ENCODE measurements at regions of chr4 and their contacts with region 1.

Region 1: DNA sequence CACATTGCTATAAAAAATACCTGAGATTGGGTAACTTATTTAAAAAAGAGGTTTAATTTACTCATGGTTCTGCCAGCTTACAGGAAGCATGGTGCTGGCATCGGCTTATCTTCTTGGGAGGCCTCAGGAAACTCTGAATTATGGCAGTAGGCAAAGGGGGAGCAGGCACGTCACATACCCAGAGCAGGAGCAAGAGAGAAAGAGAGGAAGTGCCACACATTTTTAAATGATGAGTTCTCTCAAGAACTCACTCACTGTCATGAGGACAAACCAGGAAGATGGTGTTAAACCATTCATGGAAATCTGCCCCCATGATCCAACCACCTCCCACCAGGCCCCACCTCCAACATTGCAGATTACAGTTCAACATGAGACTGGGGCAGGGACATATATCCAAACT is 10.0 kb upstream of the AFF1 start:
- DNase-seq: no peak
- H3K4me3 Mint-ChIP-seq: no peak overlapping the region
- H3K27ac Mint-ChIP-seq: no peak overlapping the region
- H3K4me1 Mint-ChIP-seq: peaks cover 21% of the 10 kb centered on the region
- H3K27me3 Mint-ChIP-seq: no peaks in the 10 kb centered on the region

Region 2: GRCh38 chr4:86908251-86908657 is 16.6 kb before region 1 on chr4:
- CTCF ChIA-PET with region 1: interaction called, 11 read pairs
- intact Hi-C with region 1: no loop called
- DNase-seq: no peak
- H3K4me3 Mint-ChIP-seq: no peak overlapping the region
- H3K27ac Mint-ChIP-seq: no peak overlapping the region
- H3K4me1 Mint-ChIP-seq: peaks cover 25% of the 10 kb centered on the region
- H3K27me3 Mint-ChIP-seq: peaks cover 5% of the 10 kb centered on the region

Region 3: DNA sequence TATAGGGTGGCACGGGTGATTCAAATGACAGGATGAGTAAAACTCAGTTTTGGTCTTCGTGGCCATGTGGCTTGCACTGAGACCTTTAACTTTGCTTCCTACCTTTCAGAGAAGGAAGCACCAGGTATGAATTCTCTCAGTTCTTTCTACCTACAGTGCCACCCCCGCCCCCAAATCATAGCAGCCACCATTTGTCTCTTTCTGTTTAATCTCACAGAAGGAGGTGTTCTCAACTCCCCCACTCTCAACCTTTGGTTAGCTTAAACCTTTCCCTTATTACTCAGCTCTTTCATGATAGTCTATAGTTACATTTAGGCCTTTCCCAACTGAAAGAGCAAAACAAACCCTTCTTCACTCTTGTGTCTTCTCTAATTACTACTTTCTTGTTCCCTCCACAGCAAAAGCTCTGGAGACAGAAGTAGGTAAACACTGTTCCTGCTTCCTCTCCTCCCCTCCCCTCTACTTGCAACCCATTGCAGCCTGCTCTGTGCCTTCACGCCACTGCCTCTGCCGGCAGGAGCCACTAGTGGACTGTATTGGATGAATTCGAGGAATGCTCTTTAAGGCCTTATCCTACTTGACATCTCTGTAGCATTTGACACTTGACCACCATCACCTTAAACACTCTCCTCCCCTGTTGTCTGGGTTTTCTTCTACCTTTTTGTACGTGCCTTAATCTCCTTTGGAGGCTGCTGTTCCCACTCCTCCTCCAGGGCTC is 133.7 kb after region 1 on chr4:
- CTCF ChIA-PET with region 1: interaction called, 22 read pairs
- intact Hi-C with region 1: no loop called
- DNase-seq: peak; percentile 68
- H3K4me3 Mint-ChIP-seq: peak overlapping the region; percentile 2
- H3K27ac Mint-ChIP-seq: peak overlapping the region; percentile 24
- H3K4me1 Mint-ChIP-seq: peaks cover 51% of the 10 kb centered on the region
- H3K27me3 Mint-ChIP-seq: no peaks in the 10 kb centered on the region

Region 4: DNA sequence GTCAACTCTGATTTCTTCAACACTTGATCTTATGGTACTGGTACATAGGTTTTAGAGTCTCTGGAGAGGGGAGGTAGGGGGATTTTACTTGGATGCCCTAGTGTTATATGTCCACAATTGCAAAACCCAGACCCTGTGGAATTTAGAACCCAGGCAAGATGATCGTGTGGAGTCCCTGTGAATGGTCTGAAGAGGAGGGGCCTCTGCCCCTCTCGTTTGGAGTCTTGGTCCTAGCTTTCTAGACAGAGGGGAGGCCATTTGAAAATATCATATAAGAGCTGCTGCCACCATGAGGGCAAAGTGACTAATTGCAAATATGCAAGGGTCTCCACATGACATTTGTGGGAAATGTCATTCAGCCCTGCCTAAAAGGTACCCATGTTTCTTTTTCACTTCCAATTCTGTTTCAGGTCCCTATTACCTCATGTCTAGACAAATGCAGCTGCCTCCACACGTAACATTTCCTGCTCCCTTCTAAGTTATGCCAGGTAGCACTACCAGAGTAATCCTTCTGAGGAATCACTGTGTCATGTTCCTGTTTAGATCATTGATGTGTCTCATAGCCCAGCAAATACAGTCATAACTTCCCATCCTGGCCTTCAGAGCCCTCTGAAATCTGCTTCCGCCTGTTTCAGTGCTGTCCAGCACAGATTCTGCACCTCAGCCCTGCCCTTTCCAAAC is 168.8 kb after region 1 on chr4:
- CTCF ChIA-PET with region 1: interaction called, 160 read pairs
- intact Hi-C with region 1: loop called (anchors 1 kb)
- DNase-seq: peak; percentile 66
- H3K4me3 Mint-ChIP-seq: no peak overlapping the region
- H3K27ac Mint-ChIP-seq: peak overlapping the region; percentile 53
- H3K4me1 Mint-ChIP-seq: peaks cover 44% of the 10 kb centered on the region
- H3K27me3 Mint-ChIP-seq: no peaks in the 10 kb centered on the region

Region 5: DNA sequence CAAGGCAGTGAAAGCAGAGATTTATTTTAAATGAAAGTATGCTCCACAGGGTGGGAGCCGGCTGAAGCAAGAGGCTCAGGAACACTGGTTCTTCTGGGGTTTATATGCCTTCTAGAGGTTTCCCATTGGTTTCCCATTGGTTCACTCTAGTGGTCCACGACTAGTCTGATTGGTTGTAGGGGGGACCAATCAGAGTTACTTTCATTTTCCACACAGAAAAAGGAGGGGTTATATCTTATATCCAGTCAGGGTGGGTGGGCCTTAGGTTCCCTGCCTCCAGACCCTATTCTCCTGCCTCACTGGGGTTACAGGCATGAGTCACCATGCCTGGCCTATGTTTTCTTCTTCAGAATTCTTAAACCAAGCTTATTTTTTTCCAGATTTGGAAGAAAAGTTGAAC is 194.0 kb after region 1 on chr4:
- CTCF ChIA-PET with region 1: interaction called, 24 read pairs
- intact Hi-C with region 1: no loop called
- DNase-seq: no peak
- H3K4me3 Mint-ChIP-seq: no peak overlapping the region
- H3K27ac Mint-ChIP-seq: peak overlapping the region; percentile 24
- H3K4me1 Mint-ChIP-seq: peaks cover 22% of the 10 kb centered on the region
- H3K27me3 Mint-ChIP-seq: no peaks in the 10 kb centered on the region

Region 6: DNA sequence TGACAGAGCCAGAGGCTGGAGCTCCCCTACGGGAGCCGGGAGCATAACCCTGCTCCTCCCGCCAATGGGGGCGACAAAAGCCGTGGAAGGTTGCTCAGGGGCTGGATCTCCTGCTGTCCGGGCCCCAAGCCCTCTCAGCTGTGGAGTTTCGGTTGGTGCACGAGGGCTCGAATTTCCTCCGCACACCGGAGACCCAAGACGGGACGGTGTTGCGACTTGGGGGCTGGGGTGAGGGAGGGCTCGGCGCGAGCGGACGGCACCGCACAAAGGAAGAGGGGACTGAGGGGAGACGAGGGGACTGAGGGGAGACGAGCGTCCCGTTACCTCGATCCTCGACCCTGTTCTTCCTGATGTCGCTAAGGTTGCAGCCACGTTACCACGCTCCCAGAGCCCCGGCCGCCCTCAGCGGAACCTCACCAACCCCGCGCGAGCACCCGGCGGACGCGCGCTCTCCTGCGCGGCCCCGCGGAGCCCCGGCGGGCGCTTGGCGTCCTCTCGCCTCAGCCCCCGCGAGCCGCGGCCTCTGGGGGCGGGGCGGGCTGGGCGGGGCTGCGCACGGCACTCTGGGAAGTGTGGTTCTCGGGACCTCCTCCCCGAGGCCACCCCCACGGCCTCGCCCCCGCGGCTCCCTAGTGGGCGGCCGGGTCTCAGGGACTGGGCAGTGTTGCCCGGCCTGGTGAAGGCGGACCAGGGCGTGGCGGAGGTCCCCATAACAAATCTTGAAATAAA is 295.4 kb after region 1 on chr4 and contains the start of gene KLHL8:
- CTCF ChIA-PET with region 1: interaction called, 5 read pairs
- intact Hi-C with region 1: loop called (anchors 1 kb)
- DNase-seq: peak; percentile 85
- H3K4me3 Mint-ChIP-seq: peak within 1 kb of the TSS; percentile 84
- H3K27ac Mint-ChIP-seq: peak within 1 kb of the TSS; percentile 82
- H3K4me1 Mint-ChIP-seq: peaks cover 16% of the 10 kb centered on the region
- H3K27me3 Mint-ChIP-seq: no peaks in the 10 kb centered on the region
- total RNA-seq, gene KLHL8: 10.7 to 12.1 TPM

Region 7: DNA sequence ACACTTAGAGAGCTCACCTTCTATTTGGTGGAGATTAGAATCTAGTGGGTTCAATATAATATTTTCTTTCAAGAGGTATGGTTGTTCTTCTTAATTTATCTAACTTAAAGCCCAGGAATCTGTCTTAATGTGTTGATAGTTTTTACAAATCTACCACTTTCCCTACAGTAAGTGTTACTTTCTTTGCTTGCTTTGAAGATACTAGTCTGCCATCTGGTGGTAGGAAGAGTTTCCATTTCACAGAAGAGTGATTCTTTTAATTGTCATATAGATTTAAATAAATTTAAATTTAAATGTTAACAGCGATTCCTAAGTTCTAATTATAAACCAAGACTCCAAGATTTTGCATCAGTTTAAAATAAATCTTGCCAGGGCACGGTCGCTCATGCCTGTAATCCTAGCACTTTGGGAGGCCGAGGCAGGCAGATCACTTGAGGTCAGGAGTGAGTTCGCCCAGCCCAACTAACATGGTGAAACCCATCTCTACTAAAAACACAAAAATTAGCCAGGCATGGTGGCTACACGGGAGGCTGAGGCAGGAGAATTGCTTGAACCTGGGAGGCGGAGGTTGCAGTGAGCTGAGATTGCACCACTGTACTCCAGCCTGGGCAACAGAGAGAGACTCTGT is 541.0 kb after region 1 on chr4:
- CTCF ChIA-PET with region 1: interaction called, 3 read pairs
- intact Hi-C with region 1: loop called (anchors 5 kb)
- DNase-seq: no peak
- H3K4me3 Mint-ChIP-seq: no peak overlapping the region
- H3K27ac Mint-ChIP-seq: no peak overlapping the region
- H3K4me1 Mint-ChIP-seq: no peaks in the 10 kb centered on the region
- H3K27me3 Mint-ChIP-seq: no peaks in the 10 kb centered on the region

Region 8: GRCh38 chr4:87657525-87657924 is 732.7 kb after region 1 on chr4:
- CTCF ChIA-PET with region 1: no interaction called
- intact Hi-C with region 1: no loop called
- DNase-seq: no peak
- H3K4me3 Mint-ChIP-seq: no peak overlapping the region
- H3K27ac Mint-ChIP-seq: no peak overlapping the region
- H3K4me1 Mint-ChIP-seq: no peaks in the 10 kb centered on the region
- H3K27me3 Mint-ChIP-seq: peaks cover 5% of the 10 kb centered on the region

Measured in activated naive CD4-positive, alpha-beta T cell treated with anti-CD3 and anti-CD28 coated beads for 36 hours (primary cell).